Activated naive CD4-positive, alpha-beta T cell treated with anti-CD3 and anti-CD28 coated beads for 36 hours (primary cell): ENCODE measurements at regions of chr12 and their contacts with region 1.

Region 1: GRCh38 chr12:54214553-54215406 is 26.0 kb upstream of the SMUG1 start:
- DNase-seq: peak; percentile 95
- H3K4me3 Mint-ChIP-seq: peak overlapping the region; percentile 61
- H3K27ac Mint-ChIP-seq: no peak overlapping the region
- H3K4me1 Mint-ChIP-seq: peaks cover 21% of the 10 kb centered on the region
- H3K27me3 Mint-ChIP-seq: peaks cover 4% of the 10 kb centered on the region

Region 2: GRCh38 chr12:54005853-54006686 is 208.7 kb before region 1 on chr12:
- CTCF ChIA-PET with region 1: interaction called, 25 read pairs
- intact Hi-C with region 1: no loop called
- DNase-seq: peak; percentile 91
- H3K4me3 Mint-ChIP-seq: peak overlapping the region; percentile 58
- H3K27ac Mint-ChIP-seq: no peak overlapping the region
- H3K4me1 Mint-ChIP-seq: peaks cover 26% of the 10 kb centered on the region
- H3K27me3 Mint-ChIP-seq: peaks cover 90% of the 10 kb centered on the region

Region 3: GRCh38 chr12:54201001-54201794 is 13.6 kb before region 1 on chr12:
- CTCF ChIA-PET with region 1: interaction called, 40 read pairs
- intact Hi-C with region 1: no loop called
- DNase-seq: peak; percentile 75
- H3K4me3 Mint-ChIP-seq: no peak overlapping the region
- H3K27ac Mint-ChIP-seq: no peak overlapping the region
- H3K4me1 Mint-ChIP-seq: no peaks in the 10 kb centered on the region
- H3K27me3 Mint-ChIP-seq: peaks cover 40% of the 10 kb centered on the region

Region 4: DNA sequence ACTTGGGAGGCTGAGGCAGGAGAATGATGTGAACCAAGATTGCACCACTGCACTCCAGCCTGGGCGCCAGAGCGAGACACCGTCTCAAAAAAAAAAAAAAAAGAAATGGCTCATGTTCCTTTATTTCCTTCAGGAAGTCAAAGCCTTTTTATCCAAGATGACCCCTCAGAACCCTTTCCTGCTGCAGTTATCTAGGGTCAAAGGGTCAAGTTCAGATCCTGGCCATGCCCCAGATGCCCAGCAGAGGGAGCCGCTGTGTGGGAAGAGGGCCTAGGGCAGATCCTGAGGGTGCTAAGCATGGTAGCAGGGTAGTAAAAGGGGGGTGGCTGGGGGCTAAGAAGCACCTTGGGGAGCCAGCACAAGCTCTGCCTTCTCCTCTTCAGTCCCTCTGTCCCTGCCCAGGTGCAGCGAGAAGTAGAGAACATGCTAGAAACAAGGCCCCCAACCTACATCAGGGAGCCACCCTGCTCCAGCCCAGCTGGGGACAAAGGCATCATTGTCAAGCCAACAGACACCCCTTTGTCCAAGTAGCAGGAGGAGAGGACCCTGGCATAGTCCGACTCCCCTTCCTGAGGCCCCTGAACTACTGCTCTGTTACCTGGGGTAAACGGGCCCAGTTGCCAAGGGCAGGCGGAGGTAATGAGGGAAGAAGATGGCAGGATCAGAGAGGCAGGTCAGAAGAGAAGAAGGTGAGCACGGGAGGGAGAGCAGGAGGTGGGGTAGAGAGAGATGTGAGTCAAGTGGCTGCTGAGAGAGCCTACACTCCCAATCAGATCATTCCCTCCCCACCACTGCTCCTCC is 79.6 kb after region 1 on chr12:
- CTCF ChIA-PET with region 1: interaction called, 10 read pairs
- intact Hi-C with region 1: no loop called
- DNase-seq: peak; percentile 82
- H3K4me3 Mint-ChIP-seq: no peak overlapping the region
- H3K27ac Mint-ChIP-seq: no peak overlapping the region
- H3K4me1 Mint-ChIP-seq: no peaks in the 10 kb centered on the region
- H3K27me3 Mint-ChIP-seq: peaks cover 7% of the 10 kb centered on the region

Region 5: DNA sequence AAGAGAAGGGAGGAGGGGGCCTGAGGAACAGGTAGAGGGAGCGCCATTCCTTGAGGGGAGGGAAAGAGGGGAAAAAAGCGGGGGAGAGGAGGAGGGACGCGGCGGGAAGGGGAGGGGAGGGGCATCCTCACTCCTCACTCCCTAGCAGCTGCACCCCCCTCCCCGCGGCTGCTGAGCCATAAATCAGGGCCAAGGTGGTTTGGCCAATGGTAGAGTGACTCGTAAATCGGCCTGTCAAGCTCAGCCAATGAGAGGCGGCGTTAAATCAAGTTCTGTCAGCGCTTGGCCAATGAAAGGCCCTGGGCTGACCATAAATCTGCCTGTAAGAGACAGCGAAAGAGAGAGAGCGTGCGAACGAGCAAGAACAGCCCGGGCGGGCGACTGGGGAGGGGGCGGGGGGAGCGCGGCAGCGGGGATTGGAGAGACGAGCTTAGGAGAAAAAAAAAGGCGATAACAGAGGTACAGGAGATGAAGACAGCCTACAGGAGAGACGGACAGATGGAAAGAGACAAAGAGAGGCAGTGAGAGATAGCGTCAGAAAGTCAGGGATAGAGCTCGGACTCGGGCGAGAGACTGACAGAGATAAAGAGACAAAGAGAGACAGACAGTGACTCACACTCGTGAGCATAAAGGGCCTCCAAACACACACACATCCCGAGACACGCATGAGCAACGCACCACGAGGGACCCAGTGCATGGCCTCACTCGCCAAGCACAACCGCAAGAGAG is 144.4 kb after region 1 on chr12:
- CTCF ChIA-PET with region 1: interaction called, 16 read pairs
- intact Hi-C with region 1: loop called (anchors 1 kb)
- DNase-seq: peak; percentile 98
- H3K4me3 Mint-ChIP-seq: no peak overlapping the region
- H3K27ac Mint-ChIP-seq: no peak overlapping the region
- H3K4me1 Mint-ChIP-seq: peaks cover 19% of the 10 kb centered on the region
- H3K27me3 Mint-ChIP-seq: no peaks in the 10 kb centered on the region

Region 6: GRCh38 chr12:54379401-54380201 is 164.8 kb after region 1 on chr12:
- CTCF ChIA-PET with region 1: interaction called, 31 read pairs
- intact Hi-C with region 1: loop called (anchors 1 kb)
- DNase-seq: peak; percentile 96
- H3K4me3 Mint-ChIP-seq: peak overlapping the region; percentile 53
- H3K27ac Mint-ChIP-seq: no peak overlapping the region
- H3K4me1 Mint-ChIP-seq: peaks cover 14% of the 10 kb centered on the region
- H3K27me3 Mint-ChIP-seq: no peaks in the 10 kb centered on the region